ENCODE measurements at regions of chr4 and their contacts with region 1.

Region 1: DNA sequence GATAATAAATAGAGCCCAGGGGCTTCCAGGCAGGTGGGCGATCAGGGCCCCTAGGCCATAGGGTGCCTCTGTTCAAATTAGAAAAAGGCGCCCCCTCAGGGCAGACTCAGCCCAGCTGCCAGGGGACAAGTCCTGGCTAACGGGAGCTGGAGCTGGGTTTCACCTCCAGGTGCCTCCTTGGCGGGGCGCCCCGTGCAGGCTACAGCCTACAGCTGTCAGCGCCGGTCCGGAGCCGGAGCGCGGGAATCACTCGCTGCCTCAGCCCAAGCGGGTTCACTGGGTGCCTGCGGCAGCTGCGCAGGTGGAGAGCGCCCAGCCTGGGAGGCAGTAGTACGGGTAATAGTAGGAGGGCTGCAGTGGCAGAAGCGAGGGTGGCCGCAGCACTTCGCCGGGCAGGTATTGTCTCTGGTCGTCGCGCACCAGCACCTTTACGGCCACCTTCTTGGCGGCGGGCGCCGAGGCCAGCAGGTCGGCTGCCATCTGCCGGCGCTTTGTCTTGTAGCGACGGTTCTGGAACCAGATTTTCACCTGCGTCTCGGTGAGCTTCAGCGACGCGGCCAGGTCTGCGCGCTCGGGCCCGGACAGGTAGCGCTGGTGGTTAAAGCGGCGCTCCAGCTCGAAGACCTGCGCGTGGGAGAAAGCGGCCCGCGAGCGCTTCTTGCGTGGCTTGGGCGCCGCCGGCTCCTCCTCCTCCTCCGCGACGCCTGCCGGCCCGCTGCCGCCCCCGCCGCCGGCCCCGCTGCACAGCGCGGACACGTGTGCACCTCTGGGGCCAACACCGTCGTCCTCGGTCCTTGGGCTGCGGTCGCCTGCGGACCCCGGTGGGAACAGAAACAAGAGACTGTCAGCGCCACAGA is 2.4 kb downstream of the NKX3-2 start:
- DNase-seq: peak; percentile 32
- ATAC-seq: no peak
- H3K4me3 Mint-ChIP-seq: peak overlapping the region; percentile 15
- H3K27ac Mint-ChIP-seq: no peak overlapping the region
- H3K4me1 Mint-ChIP-seq: peaks cover 38% of the 10 kb centered on the region
- H3K27me3 Mint-ChIP-seq: peaks cover 64% of the 10 kb centered on the region
- CTCF ChIP-seq: no peak

Region 2: GRCh38 chr4:13522282-13523104 is 19.5 kb before region 1 on chr4:
- CTCF ChIA-PET with region 1: no interaction called
- POLR2A ChIA-PET with region 1: no interaction called
- intact Hi-C with region 1: loop called (anchors 1 kb)
- DNase-seq: no peak
- ATAC-seq: no peak
- H3K4me3 Mint-ChIP-seq: peak overlapping the region; percentile 28
- H3K27ac Mint-ChIP-seq: no peak overlapping the region
- H3K4me1 Mint-ChIP-seq: peaks cover 14% of the 10 kb centered on the region
- H3K27me3 Mint-ChIP-seq: peaks cover 64% of the 10 kb centered on the region
- CTCF ChIP-seq: no peak

Region 3: GRCh38 chr4:13527981-13528820 is 13.7 kb before region 1 on chr4:
- CTCF ChIA-PET with region 1: interaction called, 4 read pairs
- POLR2A ChIA-PET with region 1: no interaction called
- intact Hi-C with region 1: loop called (anchors 1 kb)
- DNase-seq: no peak
- ATAC-seq: peak; percentile 52
- H3K4me3 Mint-ChIP-seq: peak overlapping the region; percentile 62
- H3K27ac Mint-ChIP-seq: peak overlapping the region; percentile 19
- H3K4me1 Mint-ChIP-seq: peaks cover 28% of the 10 kb centered on the region
- H3K27me3 Mint-ChIP-seq: peaks cover 80% of the 10 kb centered on the region
- CTCF ChIP-seq: no peak

Region 4: DNA sequence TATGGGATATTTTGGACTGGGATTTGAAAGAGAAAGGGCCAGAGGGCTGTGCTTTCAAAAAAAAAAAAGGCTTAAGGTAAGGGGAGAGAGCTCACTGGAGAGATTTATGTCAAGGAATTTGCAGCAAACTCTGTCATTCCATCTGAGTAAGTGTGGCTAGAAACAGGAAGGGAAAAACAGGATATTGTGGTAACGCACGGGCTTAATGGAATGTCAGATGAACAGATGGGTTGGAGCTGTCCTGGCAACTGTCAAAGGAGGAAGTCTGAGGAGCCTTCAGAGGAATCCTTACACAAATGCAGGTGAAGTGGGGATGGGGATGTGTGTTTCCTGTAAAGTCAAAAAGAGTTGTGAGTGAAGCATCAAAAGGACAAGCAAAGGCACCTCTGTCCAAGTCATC is 17.5 kb after region 1 on chr4:
- CTCF ChIA-PET with region 1: no interaction called
- POLR2A ChIA-PET with region 1: no interaction called
- intact Hi-C with region 1: no loop called
- DNase-seq: no peak
- ATAC-seq: no peak
- H3K4me3 Mint-ChIP-seq: no peak overlapping the region
- H3K27ac Mint-ChIP-seq: no peak overlapping the region
- H3K4me1 Mint-ChIP-seq: no peaks in the 10 kb centered on the region
- H3K27me3 Mint-ChIP-seq: peaks cover 4% of the 10 kb centered on the region
- CTCF ChIP-seq: no peak

Measured in activated B cell treated with CpG ODN at 0.5 μM for 24 hours (primary cell).